A673 (cell line): ENCODE measurements at regions of chr6 and their contacts with region 1.

Region 1: GRCh38 chr6:22526736-22527135 is 42.6 kb upstream of the HDGFL1 start:
- DNase-seq: no peak
- H3K4me3 ChIP-seq: no peak overlapping the region
- H3K27ac ChIP-seq: no peak overlapping the region
- H3K4me1 ChIP-seq: no peaks in the 10 kb centered on the region
- H3K27me3 ChIP-seq: no peaks in the 10 kb centered on the region
- CTCF ChIP-seq: no peak

Region 2: GRCh38 chr6:21527731-21528130 is 999.0 kb before region 1 on chr6:
- CTCF ChIA-PET with region 1: interaction called, 12 read pairs
- POLR2A ChIA-PET with region 1: no interaction called
- intact Hi-C with region 1: no loop called
- DNase-seq: no peak
- H3K4me3 ChIP-seq: no peak overlapping the region
- H3K27ac ChIP-seq: no peak overlapping the region
- H3K4me1 ChIP-seq: no peaks in the 10 kb centered on the region
- H3K27me3 ChIP-seq: no peaks in the 10 kb centered on the region
- CTCF ChIP-seq: 0 out of 2 replicates have a peak, but pooled peaks have one; percentile 10

Region 3: GRCh38 chr6:22958677-22959076 is 431.9 kb after region 1 on chr6:
- CTCF ChIA-PET with region 1: no interaction called
- POLR2A ChIA-PET with region 1: no interaction called
- intact Hi-C with region 1: no loop called
- DNase-seq: no peak
- H3K4me3 ChIP-seq: no peak overlapping the region
- H3K27ac ChIP-seq: no peak overlapping the region
- H3K4me1 ChIP-seq: no peaks in the 10 kb centered on the region
- H3K27me3 ChIP-seq: no peaks in the 10 kb centered on the region
- CTCF ChIP-seq: no peak

Region 4: DNA sequence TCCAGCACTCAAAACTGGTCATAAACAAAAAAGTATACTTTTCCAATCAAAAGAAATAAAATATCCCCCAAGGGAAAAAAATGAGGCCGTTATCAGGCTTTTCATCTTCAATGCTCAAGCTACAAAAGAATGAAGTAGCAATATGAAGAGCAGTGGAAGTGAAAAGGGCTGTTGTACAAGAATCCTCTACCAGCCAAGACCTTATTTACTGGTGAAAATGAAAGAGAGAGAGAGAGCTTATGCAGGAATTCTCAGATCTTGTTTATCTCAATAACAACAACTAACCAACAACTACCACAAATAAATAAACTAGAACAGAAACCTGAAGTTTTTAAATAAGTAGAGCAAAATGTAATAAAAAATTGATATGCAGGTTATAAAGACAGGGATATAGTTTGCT is 443.3 kb after region 1 on chr6:
- CTCF ChIA-PET with region 1: no interaction called
- POLR2A ChIA-PET with region 1: no interaction called
- intact Hi-C with region 1: no loop called
- DNase-seq: no peak
- H3K4me3 ChIP-seq: no peak overlapping the region
- H3K27ac ChIP-seq: no peak overlapping the region
- H3K4me1 ChIP-seq: no peaks in the 10 kb centered on the region
- H3K27me3 ChIP-seq: no peaks in the 10 kb centered on the region
- CTCF ChIP-seq: no peak